ENCODE measurements at regions of chr1 and their contacts with region 1.

Region 1: GRCh38 chr1:165666152-165666825 is 32.1 kb downstream of the ALDH9A1 start:
- DNase-seq: no peak
- H3K4me3 ChIP-seq: no peak overlapping the region
- H3K27ac ChIP-seq: no peak overlapping the region
- H3K4me1 ChIP-seq: no peaks in the 10 kb centered on the region
- H3K27me3 ChIP-seq: no peaks in the 10 kb centered on the region
- CTCF ChIP-seq: no peak

Region 2: GRCh38 chr1:165392634-165393571 is 273.4 kb before region 1 on chr1:
- CTCF ChIA-PET with region 1: interaction called, 11 read pairs
- POLR2A ChIA-PET with region 1: no interaction called
- intact Hi-C with region 1: no loop called
- DNase-seq: peak; percentile 58 to 64
- H3K4me3 ChIP-seq: no peak overlapping the region
- H3K27ac ChIP-seq: no peak overlapping the region
- H3K4me1 ChIP-seq: no peaks in the 10 kb centered on the region
- H3K27me3 ChIP-seq: peaks cover 19% of the 10 kb centered on the region; the same call in 1 of the 2 replicates
- CTCF ChIP-seq: peak; percentile 97

Measured in PC-9 (cell line).